Endothelial cell of umbilical vein (primary cell): ENCODE measurements at regions of chr10 and their contacts with region 1.

Region 1: GRCh38 chr10:124741281-124741921 is 2.8 kb downstream of the FAM53B start:
- DNase-seq: peak; percentile 85
- H3K4me3 ChIP-seq: peak overlapping the region in 1 of 3 experiments; percentile 17
- H3K27ac ChIP-seq: no peak overlapping the region
- H3K4me1 ChIP-seq: peaks cover 39% of the 10 kb centered on the region
- H3K27me3 ChIP-seq: no peaks in the 10 kb centered on the region
- CTCF ChIP-seq: peak; percentile 77 to 81
- POLR2A ChIP-seq: no peak

Region 2: GRCh38 chr10:124522933-124523871 is 218.2 kb before region 1 on chr10:
- CTCF ChIA-PET with region 1: interaction called, 11 read pairs
- POLR2A ChIA-PET with region 1: no interaction called
- dilution Hi-C with region 1: no loop called
- intact Hi-C with region 1: no loop called
- DNase-seq: peak; percentile 25
- H3K4me3 ChIP-seq: no peak overlapping the region
- H3K27ac ChIP-seq: no peak overlapping the region
- H3K4me1 ChIP-seq: no peaks in the 10 kb centered on the region
- H3K27me3 ChIP-seq: no peaks in the 10 kb centered on the region
- CTCF ChIP-seq: no peak
- POLR2A ChIP-seq: no peak

Region 3: DNA sequence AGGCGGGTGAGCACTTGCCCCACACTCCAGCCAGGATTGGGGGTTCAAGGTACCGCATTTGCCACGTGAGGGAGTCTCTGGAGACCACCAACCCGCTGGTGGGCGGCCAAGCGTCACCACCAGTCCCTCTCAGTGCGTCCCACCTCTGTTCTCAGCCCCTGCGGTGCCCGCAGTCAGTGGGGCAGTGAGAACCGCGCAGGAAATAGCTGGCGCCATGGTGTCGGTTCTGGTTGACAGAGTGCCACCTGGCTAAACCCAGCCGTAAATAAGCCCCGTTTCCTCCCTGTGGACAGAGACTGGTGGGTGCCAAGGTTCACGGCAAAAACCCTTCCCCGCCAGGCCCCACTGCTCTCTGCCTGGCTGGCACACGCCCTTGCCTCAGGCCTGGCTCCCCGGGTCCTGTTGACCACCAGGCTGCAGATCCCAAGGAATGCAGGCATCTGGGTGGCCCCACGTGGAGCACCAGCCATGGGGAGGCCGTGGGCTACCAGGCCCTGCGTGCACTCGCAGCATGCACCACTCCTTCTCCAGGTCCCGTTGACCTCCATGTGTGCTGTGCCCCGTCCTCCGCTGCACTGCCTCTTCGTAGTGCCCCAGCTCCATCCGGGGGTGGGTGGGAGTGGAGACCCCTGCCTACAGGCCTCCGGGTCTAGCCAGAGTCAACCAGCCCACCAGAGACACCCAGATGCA is 139.8 kb before region 1 on chr10:
- CTCF ChIA-PET with region 1: interaction called, 12 read pairs
- POLR2A ChIA-PET with region 1: no interaction called
- dilution Hi-C with region 1: no loop called
- intact Hi-C with region 1: no loop called
- DNase-seq: no peak
- H3K4me3 ChIP-seq: no peak overlapping the region
- H3K27ac ChIP-seq: no peak overlapping the region
- H3K4me1 ChIP-seq: no peaks in the 10 kb centered on the region
- H3K27me3 ChIP-seq: no peaks in the 10 kb centered on the region
- CTCF ChIP-seq: no peak
- POLR2A ChIP-seq: no peak

Region 4: DNA sequence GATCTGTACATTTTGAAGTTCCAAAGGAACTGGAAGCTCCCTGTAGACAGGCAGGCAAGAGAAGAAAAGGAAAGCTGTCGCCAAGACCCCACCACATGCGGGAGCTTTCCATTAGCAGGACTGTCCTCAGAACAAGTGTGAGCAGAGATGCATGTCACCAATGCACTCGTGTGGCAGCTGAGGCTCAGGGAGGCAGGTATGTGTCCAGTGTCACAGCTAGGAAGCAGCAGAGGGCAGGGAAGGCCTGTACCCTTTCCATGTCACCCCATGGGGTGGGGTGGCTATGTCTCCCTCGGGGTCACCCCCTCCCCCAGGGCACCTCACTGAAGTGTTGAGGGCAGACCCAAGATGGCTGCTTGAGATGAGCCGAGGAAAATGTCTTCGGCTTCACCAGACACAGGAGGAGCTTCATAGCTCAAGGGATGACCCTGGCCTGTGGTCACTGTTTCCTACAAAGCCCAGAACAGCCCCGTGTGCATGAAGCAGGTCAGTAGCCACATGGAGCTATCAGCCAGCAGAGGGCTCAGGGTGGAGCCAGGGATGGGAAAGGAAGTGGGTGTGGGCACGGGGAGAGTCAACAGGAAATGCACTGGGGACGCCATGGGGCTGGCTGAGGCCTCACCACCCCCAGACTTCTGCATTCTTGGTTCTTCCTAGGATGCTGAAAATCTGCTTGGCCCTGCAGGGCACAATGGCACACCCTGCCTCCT is 93.8 kb before region 1 on chr10:
- CTCF ChIA-PET with region 1: interaction called, 50 read pairs
- POLR2A ChIA-PET with region 1: no interaction called
- dilution Hi-C with region 1: no loop called
- intact Hi-C with region 1: loop called (anchors 1 kb)
- DNase-seq: peak; percentile 46
- H3K4me3 ChIP-seq: no peak overlapping the region
- H3K27ac ChIP-seq: peak overlapping the region; percentile 36
- H3K4me1 ChIP-seq: peaks cover 35% of the 10 kb centered on the region
- H3K27me3 ChIP-seq: no peaks in the 10 kb centered on the region
- CTCF ChIP-seq: peak; percentile 25
- POLR2A ChIP-seq: no peak

Region 5: GRCh38 chr10:124713679-124714255 is 27.6 kb before region 1 on chr10:
- CTCF ChIA-PET with region 1: interaction called, 61 read pairs
- POLR2A ChIA-PET with region 1: interaction called, 5 read pairs
- dilution Hi-C with region 1: no loop called
- intact Hi-C with region 1: no loop called
- DNase-seq: no peak
- H3K4me3 ChIP-seq: no peak overlapping the region
- H3K27ac ChIP-seq: no peak overlapping the region
- H3K4me1 ChIP-seq: peaks cover 10% of the 10 kb centered on the region
- H3K27me3 ChIP-seq: no peaks in the 10 kb centered on the region
- CTCF ChIP-seq: no peak
- POLR2A ChIP-seq: no peak

Region 6: DNA sequence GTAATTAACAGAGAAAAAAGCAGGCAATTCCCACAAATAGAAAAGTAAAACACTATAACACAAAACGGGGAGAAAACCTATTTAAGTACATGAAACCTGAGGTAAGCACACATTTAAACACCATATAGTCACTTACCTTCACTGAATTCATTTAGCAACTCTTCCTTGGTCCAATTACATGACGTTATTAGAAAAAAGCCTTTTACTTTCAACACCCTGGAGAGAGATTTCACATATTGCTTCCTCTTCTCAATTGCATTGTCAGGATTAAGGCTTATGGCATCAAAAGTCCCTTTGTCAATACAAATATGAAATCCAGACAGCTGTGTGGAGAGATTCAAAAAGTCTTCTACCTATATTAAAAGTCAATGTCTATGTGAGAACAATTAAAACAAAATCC is 23.9 kb after region 1 on chr10:
- CTCF ChIA-PET with region 1: interaction called, 16 read pairs
- POLR2A ChIA-PET with region 1: no interaction called
- dilution Hi-C with region 1: no loop called
- intact Hi-C with region 1: no loop called
- DNase-seq: no peak
- H3K4me3 ChIP-seq: no peak overlapping the region
- H3K27ac ChIP-seq: no peak overlapping the region
- H3K4me1 ChIP-seq: peaks cover 10% of the 10 kb centered on the region
- H3K27me3 ChIP-seq: no peaks in the 10 kb centered on the region
- CTCF ChIP-seq: no peak
- POLR2A ChIP-seq: no peak